Activated B cell treated with CpG ODN at 0.5 μM for 24 hours (primary cell): ENCODE measurements at regions of chr11 and their contacts with region 1.

Region 1: DNA sequence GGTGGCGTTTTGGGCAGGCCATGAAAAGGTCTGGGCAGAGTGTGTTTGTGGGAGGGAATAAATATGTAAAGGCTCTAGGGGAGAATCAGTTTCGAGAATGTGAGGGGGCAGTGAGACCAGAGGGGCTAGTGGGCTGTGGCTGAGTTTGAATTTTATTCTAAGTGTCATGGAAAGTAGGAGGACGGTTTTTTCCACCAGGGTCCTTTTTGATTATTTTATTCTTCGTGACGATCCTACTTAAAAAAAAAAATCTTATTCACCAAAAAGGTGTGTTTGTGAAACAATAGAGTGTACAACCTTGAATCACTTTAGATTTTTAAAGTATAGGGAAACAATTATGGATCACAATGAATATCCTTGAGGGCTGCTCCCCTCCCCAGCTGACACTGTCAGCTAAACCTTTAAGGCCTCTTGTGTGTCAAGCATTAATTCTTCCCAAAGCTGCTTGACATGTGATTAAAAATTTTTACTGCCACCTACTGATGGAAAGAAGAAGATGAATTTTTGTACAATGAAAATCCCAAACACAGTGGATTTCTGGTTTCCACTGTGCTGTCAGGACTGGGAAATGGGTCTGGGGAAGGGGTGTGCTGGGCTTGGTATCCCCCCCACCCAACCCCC is 107.5 kb upstream of the OR4B1 start:
- DNase-seq: no peak
- ATAC-seq: peak; percentile 6
- H3K4me3 Mint-ChIP-seq: peak overlapping the region; percentile 75
- H3K27ac Mint-ChIP-seq: peak overlapping the region; percentile 88
- H3K4me1 Mint-ChIP-seq: peaks cover 77% of the 10 kb centered on the region
- H3K27me3 Mint-ChIP-seq: no peaks in the 10 kb centered on the region
- CTCF ChIP-seq: no peak

Region 2: GRCh38 chr11:47426061-47426956 is 682.8 kb before region 1 on chr11 and contains the start of gene PSMC3:
- CTCF ChIA-PET with region 1: interaction called, 3 read pairs
- POLR2A ChIA-PET with region 1: no interaction called
- intact Hi-C with region 1: loop called (anchors 1 kb)
- DNase-seq: peak; percentile 96
- ATAC-seq: peak; percentile 98
- H3K4me3 Mint-ChIP-seq: peak within 1 kb of the TSS; percentile 99
- H3K27ac Mint-ChIP-seq: peak within 1 kb of the TSS; percentile 99
- H3K4me1 Mint-ChIP-seq: peaks cover 20% of the 10 kb centered on the region
- H3K27me3 Mint-ChIP-seq: no peaks in the 10 kb centered on the region
- CTCF ChIP-seq: no peak
- total RNA-seq, gene PSMC3: 101 and 126 TPM in 2 replicates

Region 3: GRCh38 chr11:47750725-47751124 is 358.4 kb before region 1 on chr11:
- CTCF ChIA-PET with region 1: no interaction called
- POLR2A ChIA-PET with region 1: no interaction called
- intact Hi-C with region 1: loop called (anchors 5 kb)
- DNase-seq: no peak
- ATAC-seq: no peak
- H3K4me3 Mint-ChIP-seq: no peak overlapping the region
- H3K27ac Mint-ChIP-seq: no peak overlapping the region
- H3K4me1 Mint-ChIP-seq: peaks cover 2% of the 10 kb centered on the region
- H3K27me3 Mint-ChIP-seq: no peaks in the 10 kb centered on the region
- CTCF ChIP-seq: no peak

Region 4: DNA sequence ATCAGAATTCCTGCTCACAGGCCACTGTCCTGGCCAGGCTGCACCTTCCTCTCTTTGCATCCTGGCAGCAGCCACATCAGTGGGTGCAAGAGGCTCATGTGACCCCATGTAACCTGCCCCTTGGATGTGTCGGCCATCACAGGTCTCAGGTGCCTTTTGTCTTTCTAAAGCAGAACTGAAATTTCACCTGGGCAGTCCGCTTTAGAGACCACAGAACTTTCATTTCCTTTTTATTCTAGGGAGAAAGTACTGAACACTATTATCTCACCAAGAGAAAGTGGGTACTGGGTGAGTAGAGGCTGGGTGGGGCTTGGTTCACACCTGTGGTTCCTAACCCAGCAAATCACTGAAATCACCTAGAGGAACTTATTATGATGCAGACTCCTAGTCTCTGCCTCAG is 209.4 kb before region 1 on chr11:
- CTCF ChIA-PET with region 1: no interaction called
- POLR2A ChIA-PET with region 1: interaction called, 14 read pairs
- intact Hi-C with region 1: loop called (anchors 1 kb)
- DNase-seq: no peak
- ATAC-seq: peak; percentile 94
- H3K4me3 Mint-ChIP-seq: no peak overlapping the region
- H3K27ac Mint-ChIP-seq: peak overlapping the region; percentile 83
- H3K4me1 Mint-ChIP-seq: peaks cover 48% of the 10 kb centered on the region
- H3K27me3 Mint-ChIP-seq: no peaks in the 10 kb centered on the region
- CTCF ChIP-seq: no peak

Region 5: DNA sequence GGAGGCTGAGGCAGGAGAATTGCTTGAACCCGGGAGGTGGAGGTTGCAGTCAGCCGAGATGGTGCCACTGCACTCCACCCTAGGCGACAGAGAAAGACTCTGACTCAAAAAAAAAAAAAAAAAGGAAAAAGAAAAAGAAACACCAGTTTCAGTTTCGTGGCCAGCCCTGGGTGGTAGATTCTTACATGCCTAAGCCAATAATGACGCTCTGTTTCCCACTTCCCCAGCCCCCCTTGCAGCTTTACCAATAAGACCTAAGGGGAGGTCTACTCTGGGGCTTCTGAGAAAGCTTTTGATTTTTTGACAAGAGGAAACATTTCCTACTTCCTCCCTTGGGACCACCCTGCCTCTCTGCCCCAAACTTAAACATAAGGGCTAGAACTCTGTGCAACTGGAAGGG is 158.8 kb before region 1 on chr11:
- CTCF ChIA-PET with region 1: interaction called, 6 read pairs
- POLR2A ChIA-PET with region 1: interaction called, 18 read pairs
- intact Hi-C with region 1: loop called (anchors 1 kb)
- DNase-seq: peak; percentile 47
- ATAC-seq: peak; percentile 97
- H3K4me3 Mint-ChIP-seq: peak overlapping the region; percentile 26
- H3K27ac Mint-ChIP-seq: peak overlapping the region; percentile 79
- H3K4me1 Mint-ChIP-seq: peaks cover 54% of the 10 kb centered on the region
- H3K27me3 Mint-ChIP-seq: no peaks in the 10 kb centered on the region
- CTCF ChIP-seq: no peak

Region 6: DNA sequence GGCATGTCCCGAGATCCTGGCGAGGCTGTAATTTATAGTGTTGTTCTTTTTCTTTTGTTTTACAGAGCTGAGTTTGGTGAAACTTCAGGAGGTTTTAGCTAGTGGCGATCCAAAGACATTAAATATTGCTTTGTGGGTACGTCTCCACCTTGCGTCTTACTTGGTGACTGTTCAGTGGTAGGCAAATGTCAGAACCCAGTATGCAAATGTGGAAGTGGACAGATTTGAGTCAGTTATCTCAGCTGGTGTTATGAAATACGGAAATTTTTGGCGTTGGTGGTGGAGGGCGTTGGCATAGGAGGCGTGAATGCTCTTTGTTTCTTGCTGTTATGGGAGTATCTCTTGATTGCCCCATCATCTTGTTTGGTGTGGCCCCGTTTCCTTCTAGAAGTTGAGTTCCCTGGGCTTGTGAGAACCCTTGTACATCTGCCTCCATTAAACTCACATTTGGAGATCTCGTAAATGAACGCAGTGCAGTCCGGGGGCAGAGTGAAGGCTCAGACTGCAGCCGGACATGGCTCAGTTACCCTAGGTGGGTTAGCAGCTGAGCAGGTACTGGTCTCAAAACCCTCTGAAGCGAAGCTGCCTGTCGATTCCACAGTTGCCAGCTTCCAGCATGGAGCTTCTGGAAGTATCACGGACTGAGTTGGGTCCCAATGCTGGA is 88.9 kb before region 1 on chr11:
- CTCF ChIA-PET with region 1: interaction called, 11 read pairs
- POLR2A ChIA-PET with region 1: interaction called, 26 read pairs
- intact Hi-C with region 1: loop called (anchors 1 kb)
- DNase-seq: no peak
- ATAC-seq: peak; percentile 80
- H3K4me3 Mint-ChIP-seq: peak overlapping the region; percentile 40
- H3K27ac Mint-ChIP-seq: peak overlapping the region; percentile 88
- H3K4me1 Mint-ChIP-seq: peaks cover 79% of the 10 kb centered on the region
- H3K27me3 Mint-ChIP-seq: no peaks in the 10 kb centered on the region
- CTCF ChIP-seq: no peak

Region 7: DNA sequence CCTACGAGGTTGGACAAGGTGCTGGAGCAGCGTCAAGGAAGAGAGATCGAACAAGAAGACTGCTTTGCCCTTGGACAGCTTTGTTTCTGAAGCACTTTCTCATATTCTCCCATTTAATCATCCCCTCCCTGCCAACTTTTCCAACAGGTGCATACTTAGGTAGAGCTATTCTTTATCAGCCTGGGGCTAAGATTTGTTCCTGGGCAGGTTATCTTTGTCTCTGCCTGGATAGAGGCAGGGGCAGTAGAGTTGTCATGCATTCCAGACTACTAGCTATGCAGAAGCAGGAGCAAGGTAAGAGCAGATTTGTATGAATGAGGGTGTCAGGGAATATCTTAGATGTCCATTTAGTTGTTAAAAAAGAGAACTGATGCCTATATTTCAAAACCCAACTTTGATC is 46.5 kb before region 1 on chr11:
- CTCF ChIA-PET with region 1: no interaction called
- POLR2A ChIA-PET with region 1: no interaction called
- intact Hi-C with region 1: no loop called
- DNase-seq: no peak
- ATAC-seq: no peak
- H3K4me3 Mint-ChIP-seq: no peak overlapping the region
- H3K27ac Mint-ChIP-seq: no peak overlapping the region
- H3K4me1 Mint-ChIP-seq: peaks cover 56% of the 10 kb centered on the region
- H3K27me3 Mint-ChIP-seq: no peaks in the 10 kb centered on the region
- CTCF ChIP-seq: no peak

Region 8: GRCh38 chr11:48073031-48073861 is 35.9 kb before region 1 on chr11:
- CTCF ChIA-PET with region 1: interaction called, 3 read pairs
- POLR2A ChIA-PET with region 1: interaction called, 4 read pairs
- intact Hi-C with region 1: loop called (anchors 2 kb)
- DNase-seq: no peak
- ATAC-seq: no peak
- H3K4me3 Mint-ChIP-seq: no peak overlapping the region
- H3K27ac Mint-ChIP-seq: peak overlapping the region; percentile 38
- H3K4me1 Mint-ChIP-seq: peaks cover 36% of the 10 kb centered on the region
- H3K27me3 Mint-ChIP-seq: no peaks in the 10 kb centered on the region
- CTCF ChIP-seq: no peak